Dorsolateral prefrontal cortex (tissue), 120 donors: ENCODE measurements at regions of chr1 and their contacts with region 1.

Region 1: GRCh38 chr1:185345913-185346720 is 29.1 kb upstream of the IVNS1ABP start:
- DNase-seq: no peak
- H3K4me3 ChIP-seq: no peak overlapping the region
- H3K27ac ChIP-seq: peak overlapping the region in 13 of 59 donors; percentile 0 to 59 (median 30)
- H3K27me3 ChIP-seq: peaks cover 0 to 4% (median 0%) of the 10 kb centered on the region in 45 donors
- CTCF ChIP-seq: no peak

Region 2: DNA sequence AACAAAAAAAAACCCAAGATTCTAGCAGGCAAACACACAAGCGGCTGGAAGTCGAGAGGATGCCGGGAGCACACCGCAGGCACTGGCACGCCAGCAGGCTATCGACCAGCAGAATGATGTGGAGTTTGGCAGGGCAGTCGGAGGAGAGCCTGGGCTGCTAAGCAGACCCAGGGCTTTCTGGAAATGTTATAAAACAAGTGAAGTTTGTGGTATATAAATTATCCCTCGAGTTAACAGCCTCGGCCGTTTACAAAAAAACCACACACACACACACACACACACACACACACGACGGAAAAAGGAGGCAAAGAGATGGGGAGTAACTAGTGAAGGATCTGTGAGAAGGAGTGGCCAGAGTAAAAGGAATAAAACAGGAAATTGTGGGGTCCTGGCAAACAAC is 58.2 kb after region 1 on chr1:
- intact Hi-C with region 1: loop called in 1 of 2 experiments (anchors 10 kb)
- DNase-seq: peak in 2 of 10 donors; percentile 12 to 38
- H3K4me3 ChIP-seq: peak overlapping the region in 25 of 59 donors; percentile 8 to 53 (median 34)
- H3K27ac ChIP-seq: no peak overlapping the region
- H3K27me3 ChIP-seq: no peaks in the 10 kb centered on the region
- CTCF ChIP-seq: no peak